ENCODE measurements at regions of chr17 and their contacts with region 1.

Region 1: DNA sequence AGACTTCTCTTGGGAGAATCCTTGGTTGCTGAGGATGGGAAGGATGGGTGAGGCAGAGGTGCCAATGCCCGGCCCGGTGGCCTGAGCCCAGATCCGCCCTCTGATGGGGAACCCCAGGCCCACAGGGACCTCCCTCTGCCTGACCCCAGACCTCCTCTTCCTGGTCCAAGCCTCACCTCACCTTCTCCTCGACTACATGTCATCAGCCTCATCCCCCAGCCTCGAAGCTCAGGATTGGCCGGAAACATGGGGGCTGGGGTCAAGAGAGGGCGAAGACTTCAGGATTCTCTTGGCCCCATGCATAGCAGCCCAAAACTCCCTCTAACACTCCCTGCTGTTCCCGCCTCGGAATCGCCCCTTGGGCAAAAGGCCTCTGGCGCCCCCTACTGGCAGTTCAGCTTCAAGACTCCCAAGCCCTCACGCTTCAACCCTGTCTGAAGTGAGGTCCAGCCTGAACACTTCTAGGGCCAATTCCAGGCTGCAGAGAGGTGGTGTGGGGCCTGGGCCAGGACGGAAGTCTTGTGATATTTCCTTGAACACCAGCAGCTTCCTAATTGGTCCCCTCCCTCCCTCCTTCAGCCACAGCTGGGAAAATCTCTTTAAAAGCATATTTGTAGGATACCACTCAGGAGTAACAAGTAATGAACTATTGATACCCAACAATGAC is 47.2 kb downstream of the ARHGAP27 start:
- DNase-seq: peak; percentile 86 to 89
- H3K4me3 ChIP-seq: no peak overlapping the region
- H3K27ac ChIP-seq: no peak overlapping the region
- H3K4me1 ChIP-seq: no peaks in the 10 kb centered on the region
- H3K27me3 ChIP-seq: no peaks in the 10 kb centered on the region
- CTCF ChIP-seq: peak; percentile 97 to 99 (median 98)
- POLR2A ChIP-seq: no peak

Region 2: GRCh38 chr17:45228763-45229539 is 156.5 kb before region 1 on chr17:
- intact Hi-C with region 1: loop called (anchors 5 kb)
- DNase-seq: peak; percentile 87 to 92
- H3K4me3 ChIP-seq: no peak overlapping the region
- H3K27ac ChIP-seq: peak overlapping the region; percentile 56 to 58
- H3K4me1 ChIP-seq: no peaks in the 10 kb centered on the region
- H3K27me3 ChIP-seq: no peaks in the 10 kb centered on the region
- CTCF ChIP-seq: peak in 1 of 4 experiments; percentile 12
- POLR2A ChIP-seq: peak in 1 of 2 donors; percentile 32

Region 3: GRCh38 chr17:45277216-45277849 is 108.1 kb before region 1 on chr17:
- intact Hi-C with region 1: loop called (anchors 5 kb)
- DNase-seq: peak; percentile 84 to 94
- H3K4me3 ChIP-seq: no peak overlapping the region
- H3K27ac ChIP-seq: peak overlapping the region; percentile 35 to 72
- H3K4me1 ChIP-seq: peaks cover 0 to 15% of the 10 kb centered on the region in 2 donors
- H3K27me3 ChIP-seq: no peaks in the 10 kb centered on the region
- CTCF ChIP-seq: peak; percentile 82 to 93 (median 89)
- POLR2A ChIP-seq: no peak

Region 4: GRCh38 chr17:45341533-45342158 is 43.8 kb before region 1 on chr17:
- intact Hi-C with region 1: no loop called
- DNase-seq: peak; percentile 47 to 69
- H3K4me3 ChIP-seq: no peak overlapping the region
- H3K27ac ChIP-seq: peak overlapping the region; percentile 12 to 26
- H3K4me1 ChIP-seq: no peaks in the 10 kb centered on the region
- H3K27me3 ChIP-seq: no peaks in the 10 kb centered on the region
- CTCF ChIP-seq: no peak
- POLR2A ChIP-seq: no peak